Posterior vena cava (tissue), 2 donors: ENCODE measurements at regions of chr7 and their contacts with region 1.

Region 1: GRCh38 chr7:133769668-133770067 is 357.5 kb upstream of the LRGUK start:
- DNase-seq: no peak

Region 2: GRCh38 chr7:132732321-132732865 is 1037.3 kb before region 1 on chr7:
- intact Hi-C with region 1: loop called in 1 of 2 experiments (anchors 5 kb)
- DNase-seq: no peak

Region 3: GRCh38 chr7:134071355-134072331 is 302.0 kb after region 1 on chr7:
- intact Hi-C with region 1: no loop called
- DNase-seq: no peak